HCT116 (cell line): ENCODE measurements at regions of chr18 and their contacts with region 1.

Region 1: GRCh38 chr18:11425211-11425610 is 184.2 kb upstream of the SLC35G4 start:
- DNase-seq: no peak
- ATAC-seq: no peak
- H3K4me3 ChIP-seq: no peak overlapping the region
- H3K27ac ChIP-seq: no peak overlapping the region
- H3K4me1 ChIP-seq: no peaks in the 10 kb centered on the region
- H3K27me3 ChIP-seq: no peaks in the 10 kb centered on the region
- CTCF ChIP-seq: no peak
- POLR2A ChIP-seq: no peak
- RAD21 ChIP-seq: no peak

Region 2: GRCh38 chr18:11366410-11366809 is 58.8 kb before region 1 on chr18:
- CTCF ChIA-PET with region 1: no interaction called
- POLR2A ChIA-PET with region 1: no interaction called
- RAD21 ChIA-PET with region 1: no interaction called
- intact Hi-C with region 1: loop called (anchors 10 kb)
- DNase-seq: no peak
- ATAC-seq: no peak
- H3K4me3 ChIP-seq: no peak overlapping the region
- H3K27ac ChIP-seq: no peak overlapping the region
- H3K4me1 ChIP-seq: no peaks in the 10 kb centered on the region; a peak in 1 of 4 replicates
- H3K27me3 ChIP-seq: peaks cover 3% of the 10 kb centered on the region; the same call in 1 of the 2 replicates
- CTCF ChIP-seq: no peak
- POLR2A ChIP-seq: no peak
- RAD21 ChIP-seq: no peak

Region 3: DNA sequence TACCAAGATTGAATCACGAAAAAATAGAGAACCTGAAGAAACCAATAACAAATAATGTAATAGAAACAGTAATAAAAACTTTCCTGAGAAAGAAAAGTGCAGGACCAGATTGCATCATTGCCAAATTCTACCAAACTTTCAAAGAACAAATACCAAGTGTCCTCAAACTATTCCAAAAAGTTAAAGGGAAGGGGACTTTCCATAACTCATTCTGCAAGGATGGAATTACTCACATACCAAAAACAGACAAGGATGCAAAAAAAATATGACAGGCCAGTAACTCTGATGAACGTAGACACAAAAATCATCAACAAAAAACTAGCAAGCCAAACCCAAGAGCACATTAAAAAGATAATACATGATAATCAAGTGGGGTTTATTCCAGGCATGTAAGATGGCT is 11.8 kb after region 1 on chr18:
- CTCF ChIA-PET with region 1: no interaction called
- POLR2A ChIA-PET with region 1: no interaction called
- RAD21 ChIA-PET with region 1: no interaction called
- intact Hi-C with region 1: no loop called
- DNase-seq: no peak
- ATAC-seq: no peak
- H3K4me3 ChIP-seq: no peak overlapping the region
- H3K27ac ChIP-seq: no peak overlapping the region
- H3K4me1 ChIP-seq: no peaks in the 10 kb centered on the region
- H3K27me3 ChIP-seq: peaks cover 6% of the 10 kb centered on the region; the same call in 1 of the 2 replicates
- CTCF ChIP-seq: no peak
- POLR2A ChIP-seq: no peak
- RAD21 ChIP-seq: no peak